Mammary epithelial cell (primary cell): ENCODE measurements at regions of chr3 and their contacts with region 1.

Region 1: DNA sequence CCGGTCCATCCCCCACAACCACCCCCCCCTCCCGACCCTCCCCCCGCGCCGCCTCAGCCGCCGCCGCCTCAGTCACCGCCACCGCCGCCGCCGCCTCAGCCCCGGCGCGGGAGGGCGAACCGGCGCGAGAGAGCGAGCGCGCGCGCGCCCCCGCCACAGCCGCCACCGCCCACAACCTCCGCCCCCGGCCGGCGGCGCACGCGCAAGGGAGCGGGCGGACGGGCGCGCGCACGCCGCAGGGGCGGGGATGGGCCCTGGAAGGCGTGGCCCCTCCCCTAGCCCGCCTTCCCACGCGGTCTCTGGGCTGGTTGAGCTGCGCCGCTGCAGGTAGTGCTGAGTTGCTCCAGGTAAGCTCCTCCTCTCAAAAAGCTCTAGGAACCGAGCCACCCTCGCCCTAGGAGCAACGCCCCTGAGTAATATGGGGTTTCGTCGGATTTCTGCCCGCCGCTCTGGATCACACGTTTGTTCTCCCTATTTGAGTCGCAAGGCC is at the start of gene TMCC1:
- DNase-seq: peak; percentile 93
- H3K4me3 ChIP-seq: peak within 1 kb of the TSS; percentile 71 to 93 (median 88)
- H3K27ac ChIP-seq: peak within 1 kb of the TSS; percentile 95
- H3K4me1 ChIP-seq: peaks cover 27% of the 10 kb centered on the region
- H3K27me3 ChIP-seq: no peaks in the 10 kb centered on the region
- CTCF ChIP-seq: no peak
- total RNA-seq, gene TMCC1: 28.2 to 34.3 TPM

Region 2: GRCh38 chr3:129439817-129440617 is 453.6 kb before region 1 on chr3 and contains the starts of genes IFT122 and MBD4:
- CTCF ChIA-PET with region 1: no interaction called
- dilution Hi-C with region 1: no loop called
- in situ Hi-C with region 1: no loop called
- intact Hi-C with region 1: loop called (anchors 2 kb)
- DNase-seq: peak; percentile 100
- H3K4me3 ChIP-seq: peak within 1 kb of the TSS; percentile 72 to 89 (median 78)
- H3K27ac ChIP-seq: peak within 1 kb of the TSS; percentile 80
- H3K4me1 ChIP-seq: peaks cover 20% of the 10 kb centered on the region
- H3K27me3 ChIP-seq: no peaks in the 10 kb centered on the region
- CTCF ChIP-seq: no peak
- total RNA-seq, gene IFT122: 14.7 to 17.2 TPM
- total RNA-seq, gene MBD4: 35.0 to 35.8 TPM

Region 3: GRCh38 chr3:129824926-129825541 is 68.6 kb before region 1 on chr3:
- CTCF ChIA-PET with region 1: no interaction called
- dilution Hi-C with region 1: no loop called
- in situ Hi-C with region 1: no loop called
- intact Hi-C with region 1: loop called (anchors 5 kb)
- DNase-seq: peak; percentile 29
- H3K4me3 ChIP-seq: no peak overlapping the region
- H3K27ac ChIP-seq: no peak overlapping the region
- H3K4me1 ChIP-seq: peaks cover 5% of the 10 kb centered on the region
- H3K27me3 ChIP-seq: no peaks in the 10 kb centered on the region
- CTCF ChIP-seq: peak; percentile 52 to 70

Region 4: GRCh38 chr3:129927072-129927471 is 33.4 kb after region 1 on chr3:
- CTCF ChIA-PET with region 1: no interaction called
- dilution Hi-C with region 1: no loop called
- in situ Hi-C with region 1: no loop called
- intact Hi-C with region 1: no loop called
- DNase-seq: no peak
- H3K4me3 ChIP-seq: no peak overlapping the region
- H3K27ac ChIP-seq: no peak overlapping the region
- H3K4me1 ChIP-seq: no peaks in the 10 kb centered on the region
- H3K27me3 ChIP-seq: no peaks in the 10 kb centered on the region
- CTCF ChIP-seq: no peak